ENCODE measurements at regions of chr11 and their contacts with region 1.

Region 1: DNA sequence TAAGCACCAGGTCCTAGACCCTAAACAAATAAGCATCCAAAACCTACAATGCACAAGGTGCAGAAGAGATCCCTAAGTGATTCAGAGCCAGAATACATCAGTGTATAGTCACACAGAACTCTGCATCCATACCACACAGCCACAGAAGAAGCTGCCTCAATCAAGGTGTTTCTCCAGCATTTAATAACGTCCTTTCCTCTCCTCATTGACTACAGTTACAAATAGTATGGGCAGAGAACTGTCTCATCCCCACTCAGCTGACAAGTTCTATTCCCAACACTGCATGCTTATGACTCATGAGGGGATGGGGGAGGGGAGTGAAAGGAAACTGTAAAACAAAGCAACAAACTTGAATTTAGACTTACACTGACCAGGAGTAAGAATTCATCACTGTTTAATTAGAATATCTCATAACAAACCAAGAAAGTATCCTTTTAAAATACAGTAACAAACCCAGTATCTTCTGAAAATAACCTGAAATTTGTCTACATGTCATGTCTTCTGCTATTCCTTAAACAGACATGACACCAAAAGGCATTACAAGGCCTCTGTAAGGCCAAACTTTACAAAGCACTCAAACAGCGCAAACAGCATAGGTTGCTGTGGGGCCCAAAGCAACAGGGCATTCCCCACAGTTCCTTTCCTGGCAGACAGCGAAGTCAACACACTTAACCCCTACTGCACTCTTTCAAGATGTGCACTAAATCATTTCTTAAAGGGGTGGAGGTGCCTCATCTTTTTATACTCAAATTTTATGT is 29.3 kb downstream of the CELF1 start:
- DNase-seq: peak; percentile 82
- H3K4me3 Mint-ChIP-seq: peak overlapping the region; percentile 57
- H3K27ac Mint-ChIP-seq: peak overlapping the region; percentile 90
- H3K4me1 Mint-ChIP-seq: peaks cover 79% of the 10 kb centered on the region
- H3K27me3 Mint-ChIP-seq: no peaks in the 10 kb centered on the region

Region 2: DNA sequence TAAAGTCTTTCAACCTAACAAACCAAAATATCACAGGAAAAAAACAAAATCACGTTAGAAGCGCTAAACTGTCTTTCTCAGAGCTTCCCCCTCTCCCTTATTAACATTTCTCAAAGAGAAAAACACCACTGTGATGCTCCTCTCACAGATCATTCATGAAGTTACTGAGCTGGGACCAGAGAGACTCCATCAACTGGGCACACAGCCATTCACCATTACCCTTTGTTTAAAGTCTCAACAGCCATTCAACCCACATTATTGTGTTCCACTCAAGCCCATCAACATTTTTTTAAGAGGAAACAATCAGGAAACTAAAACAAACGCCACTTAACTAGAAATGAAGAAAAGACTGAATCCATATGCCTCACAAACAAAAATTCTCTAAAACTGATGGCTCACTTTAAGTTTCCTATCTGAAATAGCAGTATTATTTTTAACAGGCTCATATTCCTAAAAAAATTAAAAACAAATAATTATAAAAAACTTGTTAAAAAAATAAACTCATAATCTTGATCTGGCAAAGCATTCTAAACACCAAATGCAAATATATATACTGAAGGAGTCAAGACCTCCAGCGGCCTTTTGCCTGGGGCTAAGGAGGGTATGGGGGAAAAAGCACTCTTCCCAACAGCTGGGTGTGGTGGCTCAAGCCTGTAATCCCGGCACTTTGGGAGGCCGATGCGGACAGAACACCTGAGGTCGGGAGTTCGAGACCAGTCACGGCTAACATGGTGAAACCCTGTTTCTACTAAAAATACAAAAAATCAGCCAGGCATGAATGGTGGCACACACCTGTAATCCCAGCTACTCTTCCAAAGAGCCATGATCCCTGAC is 15.3 kb after region 1 on chr11:
- CTCF ChIA-PET with region 1: interaction called, 4 read pairs
- intact Hi-C with region 1: loop called (anchors 1 kb)
- DNase-seq: no peak
- H3K4me3 Mint-ChIP-seq: no peak overlapping the region
- H3K27ac Mint-ChIP-seq: peak overlapping the region; percentile 91
- H3K4me1 Mint-ChIP-seq: peaks cover 64% of the 10 kb centered on the region
- H3K27me3 Mint-ChIP-seq: no peaks in the 10 kb centered on the region

Measured in activated naive CD4-positive, alpha-beta T cell treated with anti-CD3 and anti-CD28 coated beads for 36 hours (primary cell).